CD14-positive monocyte (primary cell): ENCODE measurements at regions of chr3 and their contacts with region 1.

Region 1: DNA sequence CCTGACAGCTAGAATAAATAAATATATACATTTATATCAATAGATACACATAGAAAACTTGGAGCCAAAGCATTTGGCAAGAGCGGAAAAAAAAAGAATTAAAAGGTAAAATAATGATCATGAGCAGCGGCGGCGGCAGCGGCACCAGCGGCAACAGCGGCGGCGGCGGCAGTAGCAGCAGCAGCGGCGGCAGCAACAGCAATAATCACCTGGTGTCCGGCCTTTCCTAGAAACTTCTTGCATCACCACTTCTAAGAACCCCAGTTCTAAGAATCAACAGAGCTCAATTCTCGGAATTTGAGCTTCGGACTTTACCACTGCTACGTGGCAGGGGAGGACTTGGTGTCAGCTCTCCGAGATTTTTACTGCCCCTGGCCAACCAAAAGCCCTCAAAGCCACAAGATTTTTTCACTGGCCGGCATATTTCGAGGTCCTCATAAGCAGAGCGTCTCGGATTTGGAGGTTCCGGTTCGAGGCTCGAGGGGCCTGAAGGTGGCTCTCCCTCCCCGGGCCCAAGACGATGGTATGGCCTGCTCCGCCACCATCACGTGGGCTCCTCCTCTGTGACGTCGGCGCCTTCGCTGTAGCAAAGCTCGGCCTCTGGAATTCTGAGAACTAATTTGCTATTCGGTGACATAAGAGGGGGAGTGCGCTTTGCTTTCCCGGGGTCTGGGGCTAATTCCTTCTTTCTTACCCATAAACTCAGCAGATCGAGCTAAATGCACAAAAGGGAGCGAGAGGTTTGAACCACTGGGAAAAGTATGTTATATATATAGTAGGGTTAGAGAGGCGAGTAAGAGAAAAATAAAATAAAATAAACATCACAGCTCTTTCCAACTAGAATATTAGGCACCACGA is at the start of gene BCL6:
- DNase-seq: peak; percentile 95 to 98 (median 97)
- H3K4me3 ChIP-seq: peak within 1 kb of the TSS; percentile 68 to 96 (median 80)
- H3K4me3 Mint-ChIP-seq: peak within 1 kb of the TSS; percentile 95 to 100
- H3K27ac ChIP-seq: peak within 1 kb of the TSS; percentile 96 to 99
- H3K27ac Mint-ChIP-seq: peak within 1 kb of the TSS; percentile 99 to 100 (median 100)
- H3K4me1 ChIP-seq: peaks cover 33 to 58% of the 10 kb centered on the region in 2 donors
- H3K4me1 Mint-ChIP-seq: peaks cover 40% of the 10 kb centered on the region
- H3K27me3 ChIP-seq: no peaks in the 10 kb centered on the region
- H3K27me3 Mint-ChIP-seq: peaks cover 0 to 3% (median 0%) of the 10 kb centered on the region in 3 donors
- CTCF ChIP-seq: no peak
- polyA plus RNA-seq, gene BCL6: 33.2 to 349 (median 34.9) TPM

Region 2: GRCh38 chr3:187473778-187474406 is 271.5 kb before region 1 on chr3:
- intact Hi-C with region 1: no loop called
- DNase-seq: no peak
- H3K4me3 ChIP-seq: no peak overlapping the region
- H3K4me3 Mint-ChIP-seq: no peak overlapping the region
- H3K27ac ChIP-seq: no peak overlapping the region
- H3K27ac Mint-ChIP-seq: no peak overlapping the region
- H3K4me1 ChIP-seq: no peaks in the 10 kb centered on the region
- H3K4me1 Mint-ChIP-seq: no peaks in the 10 kb centered on the region
- H3K27me3 ChIP-seq: no peaks in the 10 kb centered on the region
- H3K27me3 Mint-ChIP-seq: peaks cover 0 to 4% (median 0%) of the 10 kb centered on the region in 3 donors
- CTCF ChIP-seq: no peak

Region 3: GRCh38 chr3:187628169-187628568 is 117.3 kb before region 1 on chr3:
- intact Hi-C with region 1: no loop called
- DNase-seq: no peak
- H3K4me3 ChIP-seq: no peak overlapping the region
- H3K4me3 Mint-ChIP-seq: no peak overlapping the region
- H3K27ac ChIP-seq: no peak overlapping the region
- H3K27ac Mint-ChIP-seq: no peak overlapping the region
- H3K4me1 ChIP-seq: no peaks in the 10 kb centered on the region
- H3K4me1 Mint-ChIP-seq: no peaks in the 10 kb centered on the region
- H3K27me3 ChIP-seq: peaks cover 0 to 5% of the 10 kb centered on the region in 2 donors
- H3K27me3 Mint-ChIP-seq: peaks cover 1 to 16% (median 7%) of the 10 kb centered on the region in 3 donors
- CTCF ChIP-seq: no peak

Region 4: GRCh38 chr3:187777331-187777941 is 32.0 kb after region 1 on chr3:
- intact Hi-C with region 1: loop called in 1 of 2 experiments (anchors 2 kb)
- DNase-seq: peak; percentile 89 to 97 (median 97)
- H3K4me3 ChIP-seq: peak overlapping the region in 1 of 3 experiments; percentile 30
- H3K4me3 Mint-ChIP-seq: peak overlapping the region in 1 of 2 donors; percentile 72
- H3K27ac ChIP-seq: peak overlapping the region; percentile 44 to 90
- H3K27ac Mint-ChIP-seq: peak overlapping the region; percentile 95 to 100 (median 98)
- H3K4me1 ChIP-seq: peaks cover 70 to 74% of the 10 kb centered on the region in 2 donors
- H3K4me1 Mint-ChIP-seq: peaks cover 57% of the 10 kb centered on the region
- H3K27me3 ChIP-seq: no peaks in the 10 kb centered on the region
- H3K27me3 Mint-ChIP-seq: peaks cover 0 to 4% (median 2%) of the 10 kb centered on the region in 3 donors
- CTCF ChIP-seq: no peak

Region 5: GRCh38 chr3:187850331-187850921 is 105.0 kb after region 1 on chr3:
- intact Hi-C with region 1: loop called in 1 of 2 experiments (anchors 5 kb)
- DNase-seq: peak; percentile 46 to 80 (median 58)
- H3K4me3 ChIP-seq: peak overlapping the region in 1 of 3 experiments; percentile 18
- H3K4me3 Mint-ChIP-seq: peak overlapping the region in 1 of 2 donors; percentile 65
- H3K27ac ChIP-seq: peak overlapping the region; percentile 25 to 68
- H3K27ac Mint-ChIP-seq: peak overlapping the region; percentile 82 to 97 (median 90)
- H3K4me1 ChIP-seq: peaks cover 39 to 51% of the 10 kb centered on the region in 2 donors
- H3K4me1 Mint-ChIP-seq: peaks cover 41% of the 10 kb centered on the region
- H3K27me3 ChIP-seq: no peaks in the 10 kb centered on the region
- H3K27me3 Mint-ChIP-seq: peaks cover 0 to 4% (median 2%) of the 10 kb centered on the region in 3 donors
- CTCF ChIP-seq: no peak

Region 6: DNA sequence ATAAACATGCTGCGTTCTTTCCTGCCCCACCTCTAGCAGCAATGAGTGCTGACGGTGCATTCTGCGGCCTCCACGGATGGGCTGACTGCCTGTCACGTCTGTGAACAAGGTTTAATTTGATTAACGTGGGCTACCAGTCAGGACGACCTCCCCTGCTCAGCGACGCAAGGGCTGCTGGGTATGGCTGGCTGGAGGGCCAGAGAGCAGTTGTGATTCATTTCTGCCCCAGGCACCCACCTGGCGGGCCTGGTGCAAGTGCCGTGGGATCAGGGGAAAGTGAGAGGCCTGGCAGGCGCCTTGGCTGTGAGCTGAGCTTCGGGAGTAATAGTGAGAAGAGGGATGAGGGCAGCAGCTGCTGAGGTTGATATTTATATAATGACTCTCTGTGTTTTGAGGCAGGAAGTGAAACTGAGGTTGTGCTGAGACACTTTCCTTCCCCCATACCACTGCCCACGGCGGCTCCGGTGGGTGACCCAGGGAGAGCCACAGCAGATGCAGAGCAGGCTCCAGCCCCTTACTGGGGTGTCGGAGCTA is 190.3 kb after region 1 on chr3:
- intact Hi-C with region 1: no loop called
- DNase-seq: peak; percentile 45 to 71 (median 60)
- H3K4me3 ChIP-seq: peak overlapping the region in 1 of 3 experiments; percentile 34
- H3K4me3 Mint-ChIP-seq: peak overlapping the region; percentile 9 to 67
- H3K27ac ChIP-seq: peak overlapping the region; percentile 46 to 52
- H3K27ac Mint-ChIP-seq: peak overlapping the region; percentile 66 to 90 (median 85)
- H3K4me1 ChIP-seq: peaks cover 30 to 38% of the 10 kb centered on the region in 2 donors
- H3K4me1 Mint-ChIP-seq: peaks cover 42% of the 10 kb centered on the region
- H3K27me3 ChIP-seq: no peaks in the 10 kb centered on the region
- H3K27me3 Mint-ChIP-seq: peaks cover 0 to 3% (median 0%) of the 10 kb centered on the region in 3 donors
- CTCF ChIP-seq: no peak

Region 7: DNA sequence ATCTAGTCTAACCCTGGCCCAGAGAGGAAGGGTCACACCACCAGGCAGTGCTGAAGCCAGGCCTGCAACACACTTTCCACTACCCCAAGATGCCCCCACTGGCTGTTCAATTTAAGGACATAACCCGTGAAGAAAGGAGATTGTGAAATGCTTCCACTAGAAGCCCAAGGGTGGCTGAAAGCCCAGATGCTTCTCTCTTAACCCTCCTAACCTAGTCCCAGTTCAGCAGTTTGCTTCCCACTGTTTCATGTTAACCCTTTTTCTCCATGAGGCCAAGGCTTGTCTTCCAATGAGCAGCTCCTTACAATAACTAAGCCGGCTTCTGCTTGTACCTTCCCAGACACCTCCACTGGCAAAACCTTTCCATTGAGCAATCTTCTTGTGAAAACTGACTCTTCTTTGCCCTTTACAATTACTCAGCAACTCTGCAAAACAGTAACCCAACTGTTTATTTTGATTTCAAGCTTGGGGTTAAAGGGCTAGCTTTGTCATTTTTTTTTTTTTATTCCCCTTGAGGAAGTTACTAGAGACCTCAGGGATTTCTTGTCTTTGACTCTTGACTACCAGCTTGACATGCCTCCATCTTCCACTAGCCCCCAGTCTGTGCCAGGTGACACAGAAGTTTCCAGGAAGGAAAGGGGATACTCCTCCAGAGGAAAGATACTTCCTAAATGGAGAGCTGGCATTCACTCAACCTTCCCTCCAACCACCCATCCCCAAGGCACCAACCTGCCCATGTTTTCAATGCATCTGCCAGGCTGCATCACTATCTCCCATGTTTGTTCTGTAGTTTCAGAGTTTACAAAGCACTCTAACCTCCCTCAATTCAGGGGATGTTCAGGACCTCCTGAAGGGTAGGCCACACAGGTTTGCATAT is 209.9 kb after region 1 on chr3:
- intact Hi-C with region 1: loop called in 1 of 2 experiments (anchors 10 kb)
- DNase-seq: peak; percentile 54 to 71 (median 65)
- H3K4me3 ChIP-seq: peak overlapping the region in 1 of 3 experiments; percentile 48
- H3K4me3 Mint-ChIP-seq: peak overlapping the region; percentile 45 to 72
- H3K27ac ChIP-seq: peak overlapping the region; percentile 73 to 77
- H3K27ac Mint-ChIP-seq: peak overlapping the region; percentile 90 to 97 (median 95)
- H3K4me1 ChIP-seq: peaks cover 86 to 87% of the 10 kb centered on the region in 2 donors
- H3K4me1 Mint-ChIP-seq: peaks cover 85% of the 10 kb centered on the region
- H3K27me3 ChIP-seq: no peaks in the 10 kb centered on the region
- H3K27me3 Mint-ChIP-seq: no peaks in the 10 kb centered on the region
- CTCF ChIP-seq: no peak

Region 8: DNA sequence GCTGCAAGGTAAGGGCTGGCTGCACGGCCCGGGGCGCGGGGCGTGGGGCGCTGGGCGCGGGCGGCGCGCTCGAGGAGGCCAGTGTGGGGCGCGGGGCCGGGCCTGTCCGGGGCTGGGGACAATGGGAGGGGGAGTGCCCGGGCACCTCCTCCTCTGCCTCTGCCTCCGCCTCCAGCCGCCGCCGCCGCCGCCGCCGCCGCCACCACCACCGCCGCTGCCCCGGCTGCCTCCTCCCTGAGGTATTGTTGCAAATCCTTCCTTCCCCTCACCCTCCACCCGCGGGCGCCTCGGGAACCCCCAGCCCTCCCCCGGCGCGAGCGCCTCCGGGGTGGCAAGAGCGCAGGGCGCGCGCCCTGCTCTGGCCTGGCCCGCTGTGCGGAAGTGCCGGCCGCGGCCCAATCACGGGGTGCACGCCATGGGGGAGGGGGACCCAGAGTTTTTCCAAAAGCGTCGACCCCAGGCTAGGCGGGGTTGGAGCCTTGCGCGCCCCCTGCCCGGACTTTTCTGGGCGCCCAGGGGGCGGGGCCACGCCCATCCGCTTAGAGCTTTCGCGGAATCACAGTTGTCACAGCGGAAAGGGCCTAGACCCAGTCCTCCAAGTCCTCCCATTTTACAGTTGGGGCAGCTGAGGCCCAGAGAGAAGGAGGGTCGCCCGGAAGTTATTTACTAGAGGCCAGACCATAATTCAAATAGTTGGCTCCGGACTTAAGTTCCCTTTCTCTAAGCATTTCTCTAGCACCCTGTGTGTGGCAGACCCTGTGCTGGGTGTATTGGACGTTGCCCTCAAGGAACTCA is 408.8 kb after region 1 on chr3 and contains the start of gene LPP:
- intact Hi-C with region 1: loop called (anchors 5 kb)
- DNase-seq: peak; percentile 84 to 95 (median 91)
- H3K4me3 ChIP-seq: peak within 1 kb of the TSS; percentile 64 to 86 (median 69)
- H3K4me3 Mint-ChIP-seq: peak within 1 kb of the TSS; percentile 95 to 96
- H3K27ac ChIP-seq: peak within 1 kb of the TSS; percentile 87 to 96
- H3K27ac Mint-ChIP-seq: peak within 1 kb of the TSS; percentile 93 to 97 (median 96)
- H3K4me1 ChIP-seq: peaks cover 20 to 34% of the 10 kb centered on the region in 2 donors
- H3K4me1 Mint-ChIP-seq: peaks cover 44% of the 10 kb centered on the region
- H3K27me3 ChIP-seq: no peaks in the 10 kb centered on the region
- H3K27me3 Mint-ChIP-seq: peaks cover 0 to 6% (median 0%) of the 10 kb centered on the region in 3 donors
- CTCF ChIP-seq: no peak
- polyA plus RNA-seq, gene LPP: 14.1 to 23.2 (median 15.3) TPM

Region 9: DNA sequence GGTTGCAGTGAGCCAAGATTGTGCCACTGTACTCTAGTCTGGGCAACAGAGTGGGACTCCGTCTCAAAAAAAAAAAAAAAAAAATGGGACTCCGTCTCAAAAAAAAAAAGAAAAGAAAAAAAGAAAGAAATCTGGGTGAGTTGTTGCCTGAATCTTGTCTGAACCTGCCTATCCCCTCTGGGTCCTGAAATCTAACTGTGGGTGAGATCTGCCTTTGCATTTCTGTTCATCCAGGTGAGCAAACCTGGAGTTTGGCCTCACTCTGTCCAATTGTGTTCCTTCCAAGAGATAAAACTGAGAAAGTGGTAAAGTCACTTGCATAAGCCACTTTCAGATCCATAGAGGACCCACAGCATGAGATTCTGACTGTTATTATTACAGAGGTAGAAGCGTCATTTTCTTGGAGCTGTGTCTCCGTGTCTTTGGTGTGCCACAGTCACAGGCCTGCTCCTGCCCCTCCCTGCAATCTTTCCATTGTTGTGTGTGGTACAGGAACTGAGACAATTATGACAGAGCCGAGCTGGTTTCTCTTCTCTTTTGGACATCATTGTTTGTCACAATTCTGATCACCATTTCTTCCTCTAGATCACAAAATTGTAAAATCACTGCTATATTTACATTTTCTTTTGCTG is 644.4 kb after region 1 on chr3:
- intact Hi-C with region 1: loop called in 1 of 2 experiments (anchors 10 kb)
- DNase-seq: peak; percentile 88 to 94 (median 89)
- H3K4me3 ChIP-seq: peak overlapping the region in 1 of 3 experiments; percentile 45
- H3K4me3 Mint-ChIP-seq: peak overlapping the region; percentile 37 to 46
- H3K27ac ChIP-seq: peak overlapping the region; percentile 96 to 98
- H3K27ac Mint-ChIP-seq: peak overlapping the region; percentile 98 to 99 (median 99)
- H3K4me1 ChIP-seq: peaks cover 59 to 71% of the 10 kb centered on the region in 2 donors
- H3K4me1 Mint-ChIP-seq: peaks cover 60% of the 10 kb centered on the region
- H3K27me3 ChIP-seq: no peaks in the 10 kb centered on the region
- H3K27me3 Mint-ChIP-seq: no peaks in the 10 kb centered on the region
- CTCF ChIP-seq: no peak

Region 10: DNA sequence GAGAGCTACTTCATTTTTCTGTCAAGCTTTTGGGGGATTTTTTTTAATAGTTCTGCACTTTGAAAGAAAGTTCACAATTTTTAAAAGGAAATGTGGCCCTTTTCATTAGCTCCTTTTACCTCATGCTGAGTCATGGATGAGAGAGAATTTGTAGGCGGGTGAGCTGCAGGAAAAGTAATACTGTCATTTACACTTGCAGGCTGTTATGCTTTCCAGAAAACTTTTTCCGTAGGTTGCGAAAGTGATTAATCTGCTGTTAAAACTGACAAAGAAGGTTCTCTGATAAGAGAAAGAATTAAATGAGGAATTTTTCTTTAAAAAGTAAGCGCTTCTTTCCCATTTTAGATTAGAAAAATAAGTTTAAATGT is 838.7 kb after region 1 on chr3:
- intact Hi-C with region 1: loop called in 1 of 2 experiments (anchors 10 kb)
- DNase-seq: peak in 2 of 3 donors; percentile 30 to 66
- H3K4me3 ChIP-seq: peak overlapping the region in 2 of 3 experiments; percentile 24 to 62
- H3K4me3 Mint-ChIP-seq: peak overlapping the region in 1 of 2 donors; percentile 55
- H3K27ac ChIP-seq: peak overlapping the region in 1 of 2 donors; percentile 61
- H3K27ac Mint-ChIP-seq: peak overlapping the region in 1 of 7 donors; percentile 89
- H3K4me1 ChIP-seq: peaks cover 65 to 73% of the 10 kb centered on the region in 2 donors
- H3K4me1 Mint-ChIP-seq: peaks cover 11% of the 10 kb centered on the region
- H3K27me3 ChIP-seq: no peaks in the 10 kb centered on the region
- H3K27me3 Mint-ChIP-seq: no peaks in the 10 kb centered on the region
- CTCF ChIP-seq: no peak